ENCODE measurements at regions of chr2 and their contacts with region 1.

Region 1: DNA sequence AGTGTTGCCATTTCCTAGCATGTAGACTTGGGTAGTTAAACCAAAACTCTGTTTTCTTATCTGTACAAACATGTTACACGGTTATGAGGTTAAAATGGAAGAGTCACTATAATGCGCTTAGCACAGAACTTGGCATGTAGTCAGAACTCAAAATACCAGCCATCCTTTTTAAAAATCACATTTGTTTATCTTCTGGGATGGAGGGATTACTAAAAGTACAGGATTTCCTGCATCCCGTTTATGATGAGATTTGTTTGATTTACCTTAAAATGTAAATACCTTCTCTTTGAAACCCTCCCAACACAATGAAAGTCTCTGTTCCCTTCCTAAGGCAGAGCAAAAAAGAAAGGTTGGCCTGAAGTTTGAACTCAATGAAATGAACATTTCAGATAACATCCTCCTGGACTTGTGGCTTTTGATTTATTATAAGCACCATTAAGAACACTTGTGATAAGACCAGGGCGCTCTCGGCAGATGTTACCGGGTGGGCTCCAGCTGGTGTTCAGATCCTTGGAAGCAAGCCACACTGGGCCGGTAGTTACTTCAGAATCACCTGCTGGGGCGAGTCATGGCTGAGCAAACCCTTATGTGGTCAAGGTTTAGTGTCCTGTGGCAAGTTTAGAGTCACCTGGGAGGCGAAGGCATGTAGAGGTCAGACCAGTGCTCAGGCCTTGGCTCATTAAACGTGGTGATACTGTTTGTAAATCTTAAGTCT is 105.7 kb downstream of the MGAT5 start:
- DNase-seq: no peak
- ATAC-seq: no peak
- H3K4me3 Mint-ChIP-seq: no peak overlapping the region
- H3K27ac Mint-ChIP-seq: no peak overlapping the region
- H3K4me1 Mint-ChIP-seq: no peaks in the 10 kb centered on the region
- H3K27me3 Mint-ChIP-seq: no peaks in the 10 kb centered on the region
- CTCF ChIP-seq: no peak

Region 2: DNA sequence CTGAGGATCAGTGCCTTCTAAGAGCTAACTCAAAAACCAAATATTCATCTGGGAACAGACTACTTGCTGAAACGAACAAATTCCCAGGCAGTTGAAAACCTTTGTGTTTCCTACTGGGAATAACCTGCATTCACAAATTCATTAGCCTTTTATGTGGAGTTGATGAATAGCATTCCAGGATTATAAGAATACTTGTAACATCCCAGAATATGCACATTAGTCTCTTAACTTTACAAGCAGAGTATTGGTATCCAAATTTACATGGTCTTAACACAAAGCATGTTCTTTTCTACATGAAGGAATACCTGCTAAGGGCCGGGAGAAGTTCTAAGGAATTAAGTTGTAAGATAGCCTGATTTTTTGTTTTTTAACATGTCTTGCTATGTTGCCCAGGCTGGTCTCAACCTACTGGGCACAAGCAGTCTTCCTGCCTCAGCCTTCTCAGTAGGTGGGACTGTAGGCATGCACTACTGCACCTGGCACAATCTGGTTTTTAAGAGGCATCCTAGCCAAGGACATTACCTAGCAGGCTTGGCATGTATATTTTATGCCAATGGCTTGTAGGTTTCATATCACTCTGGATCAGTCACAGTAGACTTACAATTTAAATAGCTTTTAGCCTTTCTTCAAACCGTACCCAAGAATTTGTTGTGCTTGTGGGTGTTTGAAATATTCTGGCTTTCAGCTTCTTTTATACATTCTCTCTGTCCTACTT is 55.0 kb before region 1 on chr2:
- CTCF ChIA-PET with region 1: no interaction called
- POLR2A ChIA-PET with region 1: no interaction called
- intact Hi-C with region 1: no loop called
- DNase-seq: no peak
- ATAC-seq: peak; percentile 40
- H3K4me3 Mint-ChIP-seq: no peak overlapping the region
- H3K27ac Mint-ChIP-seq: peak overlapping the region; percentile 64
- H3K4me1 Mint-ChIP-seq: peaks cover 90% of the 10 kb centered on the region
- H3K27me3 Mint-ChIP-seq: no peaks in the 10 kb centered on the region
- CTCF ChIP-seq: no peak

Region 3: DNA sequence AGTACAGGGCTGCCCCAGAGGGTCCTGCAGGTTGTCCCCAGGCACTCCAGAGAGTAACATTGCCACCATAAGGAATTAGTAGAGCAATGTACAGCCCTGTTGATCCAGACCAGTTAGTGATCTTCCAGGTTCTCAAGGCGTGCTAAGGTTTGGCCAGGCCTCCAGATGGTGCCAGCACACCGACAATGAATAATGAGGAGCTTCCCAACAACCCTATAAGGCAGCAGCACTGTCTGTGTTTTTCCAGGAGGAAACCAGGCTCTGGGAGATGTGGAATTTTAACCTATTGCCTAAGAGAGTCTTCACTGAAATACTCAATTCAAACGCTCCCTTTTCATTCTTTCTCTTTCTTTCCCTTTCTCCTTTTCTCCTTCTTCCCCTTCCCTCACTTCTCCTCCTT is 16.4 kb after region 1 on chr2:
- CTCF ChIA-PET with region 1: no interaction called
- POLR2A ChIA-PET with region 1: no interaction called
- intact Hi-C with region 1: loop called (anchors 2 kb)
- DNase-seq: no peak
- ATAC-seq: no peak
- H3K4me3 Mint-ChIP-seq: no peak overlapping the region
- H3K27ac Mint-ChIP-seq: peak overlapping the region; percentile 26
- H3K4me1 Mint-ChIP-seq: no peaks in the 10 kb centered on the region
- H3K27me3 Mint-ChIP-seq: no peaks in the 10 kb centered on the region
- CTCF ChIP-seq: no peak

Measured in activated B cell treated with CpG ODN at 0.5 μM for 24 hours (primary cell).